Activated CD8-positive, alpha-beta memory T cell treated with anti-CD3 and anti-CD28 coated beads, Interleukin-2, amount 10 ng/mL, durations not matched to agents 7 days and 5 days (primary cell): ENCODE measurements at regions of chr1 and their contacts with region 1.

Region 1: GRCh38 chr1:212665241-212666115 is 34.2 kb downstream of the BATF3 start:
- DNase-seq: peak; percentile 87
- ATAC-seq: peak; percentile 98
- H3K4me3 Mint-ChIP-seq: peak overlapping the region; percentile 71
- H3K27ac Mint-ChIP-seq: peak overlapping the region; percentile 78
- H3K4me1 Mint-ChIP-seq: peaks cover 43% of the 10 kb centered on the region
- H3K27me3 Mint-ChIP-seq: peaks cover 15% of the 10 kb centered on the region

Region 2: GRCh38 chr1:212477014-212477679 is 188.3 kb before region 1 on chr1:
- CTCF ChIA-PET with region 1: interaction called, 24 read pairs
- DNase-seq: peak; percentile 86
- ATAC-seq: peak; percentile 93
- H3K4me3 Mint-ChIP-seq: no peak overlapping the region
- H3K27ac Mint-ChIP-seq: no peak overlapping the region
- H3K4me1 Mint-ChIP-seq: peaks cover 25% of the 10 kb centered on the region
- H3K27me3 Mint-ChIP-seq: peaks cover 20% of the 10 kb centered on the region

Region 3: DNA sequence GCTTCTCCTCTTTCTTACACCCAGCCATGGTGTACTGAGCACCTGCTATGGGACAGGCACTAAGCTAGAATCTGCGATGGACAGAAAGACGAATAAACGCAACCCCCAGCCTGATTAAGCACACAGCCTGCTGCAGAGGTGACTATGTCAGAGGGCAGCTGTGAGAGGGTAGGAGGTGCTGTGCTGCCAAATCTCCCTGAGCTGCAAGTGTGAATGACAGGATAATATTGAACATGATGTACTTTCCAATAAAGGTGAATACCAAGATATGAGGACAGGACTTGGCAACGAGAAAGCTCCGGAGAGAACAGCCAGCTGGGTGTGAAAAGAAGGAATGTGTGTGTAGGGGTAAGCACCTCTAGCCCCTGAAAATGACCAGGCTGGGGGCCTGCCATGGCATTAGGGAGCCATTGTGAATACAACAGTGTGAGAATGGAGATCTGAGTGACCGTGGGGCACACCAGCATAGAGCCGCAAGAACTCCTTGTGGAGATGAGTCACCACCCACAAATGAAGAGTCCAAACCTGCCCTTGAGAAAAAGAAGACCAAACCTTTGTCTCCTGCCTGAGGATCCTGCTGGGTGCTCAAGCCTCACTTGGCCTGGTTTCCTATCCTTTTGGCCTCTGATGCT is 139.9 kb before region 1 on chr1:
- CTCF ChIA-PET with region 1: no interaction called
- DNase-seq: no peak
- ATAC-seq: no peak
- H3K4me3 Mint-ChIP-seq: no peak overlapping the region
- H3K27ac Mint-ChIP-seq: no peak overlapping the region
- H3K4me1 Mint-ChIP-seq: no peaks in the 10 kb centered on the region
- H3K27me3 Mint-ChIP-seq: peaks cover 44% of the 10 kb centered on the region

Region 4: GRCh38 chr1:212641956-212642355 is 23.5 kb before region 1 on chr1:
- CTCF ChIA-PET with region 1: interaction called, 18 read pairs
- DNase-seq: no peak
- ATAC-seq: no peak
- H3K4me3 Mint-ChIP-seq: no peak overlapping the region
- H3K27ac Mint-ChIP-seq: no peak overlapping the region
- H3K4me1 Mint-ChIP-seq: peaks cover 15% of the 10 kb centered on the region
- H3K27me3 Mint-ChIP-seq: peaks cover 16% of the 10 kb centered on the region

Region 5: DNA sequence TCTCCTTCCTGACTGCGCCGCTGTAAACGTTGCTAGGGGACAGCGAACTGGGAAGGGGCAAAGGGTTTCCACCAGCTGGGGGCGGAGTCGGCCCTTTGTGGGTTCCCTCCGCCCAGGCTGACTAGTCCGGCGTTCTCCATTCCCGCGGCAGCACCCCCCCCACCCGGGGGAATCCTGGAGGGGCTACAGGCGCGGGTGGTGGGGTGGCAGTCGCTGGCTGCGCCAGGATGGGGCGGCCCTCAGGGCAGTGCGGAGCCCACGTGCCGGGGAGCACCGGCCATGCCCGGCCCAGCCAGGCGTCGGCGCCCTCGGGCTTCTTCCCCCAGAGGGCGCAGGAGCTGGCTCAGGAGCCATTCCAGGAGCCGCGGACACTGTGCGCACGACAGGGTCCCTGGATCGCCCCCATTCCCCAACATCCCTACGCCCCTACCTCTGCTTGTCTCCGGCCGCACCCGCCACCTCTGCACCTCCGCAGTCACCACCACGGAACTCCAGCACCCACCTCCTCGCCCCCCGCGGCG is 33.7 kb after region 1 on chr1:
- CTCF ChIA-PET with region 1: interaction called, 109 read pairs
- DNase-seq: peak; percentile 78
- ATAC-seq: peak; percentile 77
- H3K4me3 Mint-ChIP-seq: peak overlapping the region; percentile 83
- H3K27ac Mint-ChIP-seq: peak overlapping the region; percentile 92
- H3K4me1 Mint-ChIP-seq: peaks cover 75% of the 10 kb centered on the region
- H3K27me3 Mint-ChIP-seq: no peaks in the 10 kb centered on the region

Region 6: GRCh38 chr1:212749821-212750535 is 84.5 kb after region 1 on chr1:
- CTCF ChIA-PET with region 1: interaction called, 45 read pairs
- DNase-seq: no peak
- ATAC-seq: no peak
- H3K4me3 Mint-ChIP-seq: no peak overlapping the region
- H3K27ac Mint-ChIP-seq: peak overlapping the region; percentile 74
- H3K4me1 Mint-ChIP-seq: peaks cover 55% of the 10 kb centered on the region
- H3K27me3 Mint-ChIP-seq: no peaks in the 10 kb centered on the region

Region 7: DNA sequence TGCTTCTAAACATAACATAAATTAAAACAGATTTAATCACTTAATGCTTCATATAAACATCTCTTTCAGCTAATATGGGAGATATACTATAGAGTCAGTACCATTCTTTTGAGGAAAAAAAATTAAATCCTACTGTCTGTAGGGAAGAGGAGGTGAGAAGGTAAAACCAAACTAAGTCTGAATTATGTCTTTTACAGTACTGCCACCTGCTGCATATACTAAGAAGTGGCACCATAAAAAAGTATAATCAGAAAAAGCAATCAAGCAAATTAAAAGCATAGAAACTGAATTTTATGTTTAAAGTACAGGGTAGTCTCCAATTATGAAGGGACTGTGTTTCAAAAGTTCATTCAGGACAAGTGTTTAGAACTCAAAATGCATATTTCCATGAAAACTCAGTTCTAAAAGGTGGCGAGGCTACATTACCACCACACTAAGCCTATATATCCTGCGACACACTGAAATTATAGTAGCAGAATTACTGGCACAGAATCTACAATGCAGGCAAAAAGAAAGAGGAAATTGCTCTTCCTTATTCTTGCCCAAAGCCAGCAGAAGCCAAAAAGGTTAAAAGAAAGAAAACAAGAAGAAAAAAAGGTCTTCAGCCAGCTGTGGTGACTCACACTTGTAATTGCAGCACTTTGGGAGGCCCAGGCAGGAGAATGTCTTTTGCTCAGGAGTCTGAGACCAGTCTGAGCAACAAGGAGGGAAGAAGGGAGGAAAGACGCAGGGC is 117.1 kb after region 1 on chr1:
- CTCF ChIA-PET with region 1: interaction called, 42 read pairs
- DNase-seq: no peak
- ATAC-seq: peak; percentile 60
- H3K4me3 Mint-ChIP-seq: no peak overlapping the region
- H3K27ac Mint-ChIP-seq: no peak overlapping the region
- H3K4me1 Mint-ChIP-seq: peaks cover 36% of the 10 kb centered on the region
- H3K27me3 Mint-ChIP-seq: no peaks in the 10 kb centered on the region

Region 8: DNA sequence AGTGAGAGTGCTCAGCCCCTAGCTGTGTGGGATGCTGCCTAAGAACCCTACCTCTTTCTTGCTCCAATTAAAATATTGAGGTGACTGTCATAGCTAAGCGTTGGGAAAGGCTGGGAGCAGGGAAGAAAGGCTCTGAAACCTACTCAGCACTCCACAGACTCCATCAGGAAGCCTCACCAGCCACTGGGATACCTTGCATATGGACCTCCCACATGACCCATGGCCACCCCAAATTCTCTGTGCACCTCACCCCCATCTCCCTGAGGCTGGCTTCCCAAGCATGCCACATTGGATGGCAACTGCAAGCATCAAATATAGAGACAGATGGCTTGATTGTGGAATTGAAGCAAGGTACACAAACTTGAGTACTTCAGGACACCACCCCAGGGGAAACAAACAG is 234.4 kb after region 1 on chr1:
- CTCF ChIA-PET with region 1: no interaction called
- DNase-seq: no peak
- ATAC-seq: no peak
- H3K4me3 Mint-ChIP-seq: no peak overlapping the region
- H3K27ac Mint-ChIP-seq: no peak overlapping the region
- H3K4me1 Mint-ChIP-seq: no peaks in the 10 kb centered on the region
- H3K27me3 Mint-ChIP-seq: no peaks in the 10 kb centered on the region